ENCODE measurements at regions of chr2 and their contacts with region 1.

Region 1: GRCh38 chr2:12606472-12607000 is 110.2 kb upstream of the TRIB2 start:
- DNase-seq: peak in 3 of 9 donors; percentile 3 to 26 (median 12)
- ATAC-seq: no peak
- H3K4me3 ChIP-seq: no peak overlapping the region
- H3K4me3 Mint-ChIP-seq: no peak overlapping the region
- H3K27ac ChIP-seq: no peak overlapping the region
- H3K27ac Mint-ChIP-seq: no peak overlapping the region
- H3K4me1 ChIP-seq: peaks cover 0 to 10% of the 10 kb centered on the region in 2 donors
- H3K4me1 Mint-ChIP-seq: peaks cover 7 to 37% (median 25%) of the 10 kb centered on the region in 7 donors
- H3K27me3 ChIP-seq: no peaks in the 10 kb centered on the region
- H3K27me3 Mint-ChIP-seq: peaks cover 0 to 16% (median 0%) of the 10 kb centered on the region in 5 donors

Region 2: GRCh38 chr2:12430407-12431133 is 176.0 kb before region 1 on chr2:
- CTCF ChIA-PET with region 1: no interaction called
- POLR2A ChIA-PET with region 1: no interaction called
- intact Hi-C with region 1: loop called in 1 of 2 experiments (anchors 5 kb)
- DNase-seq: peak in 6 of 9 donors; percentile 10 to 28 (median 20)
- ATAC-seq: peak; percentile 87
- H3K4me3 ChIP-seq: peak overlapping the region; percentile 47
- H3K4me3 Mint-ChIP-seq: peak overlapping the region; percentile 31 to 83 (median 77)
- H3K27ac ChIP-seq: peak overlapping the region; percentile 22
- H3K27ac Mint-ChIP-seq: peak overlapping the region; percentile 60 to 91 (median 82)
- H3K4me1 ChIP-seq: peaks cover 0 to 12% of the 10 kb centered on the region in 2 donors
- H3K4me1 Mint-ChIP-seq: peaks cover 25 to 70% (median 49%) of the 10 kb centered on the region in 7 donors
- H3K27me3 ChIP-seq: no peaks in the 10 kb centered on the region
- H3K27me3 Mint-ChIP-seq: no peaks in the 10 kb centered on the region

Region 3: DNA sequence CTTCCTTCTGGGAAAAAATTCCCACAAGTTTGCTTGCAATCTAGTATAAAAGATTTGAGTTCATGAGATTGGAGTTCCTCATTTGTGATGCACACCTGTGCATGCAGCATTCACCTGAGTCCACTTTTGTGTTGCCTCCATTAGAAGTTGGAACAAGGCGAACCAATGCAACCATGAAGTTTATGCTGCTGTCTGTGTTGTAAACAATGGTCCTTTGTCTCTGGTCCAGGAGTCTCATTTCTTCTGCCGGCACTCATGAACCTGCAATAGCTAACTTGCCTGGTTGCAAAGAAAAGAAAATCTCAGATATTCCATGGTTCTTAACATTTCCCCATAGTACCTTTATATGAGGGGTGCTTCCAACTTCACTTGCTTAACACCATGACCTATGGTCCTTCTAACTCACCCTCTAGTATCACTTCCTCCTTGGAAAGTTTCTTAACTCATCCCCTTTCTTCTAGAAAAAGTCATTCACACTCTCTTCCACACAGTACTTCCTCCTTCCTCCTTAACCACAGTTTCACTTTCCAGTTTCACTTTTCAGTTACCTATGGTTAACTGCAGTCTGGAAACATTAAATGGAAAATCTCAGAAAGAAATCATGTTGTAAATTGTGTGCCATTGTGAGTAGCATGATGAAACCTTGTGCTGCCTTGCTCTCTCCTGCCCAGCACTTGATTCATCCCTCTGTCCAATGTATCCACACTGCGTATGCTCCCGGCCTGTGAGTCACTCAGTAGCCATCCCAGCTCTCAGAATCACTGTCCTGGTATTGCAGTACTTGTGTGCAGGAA is 18.6 kb before region 1 on chr2:
- CTCF ChIA-PET with region 1: no interaction called
- POLR2A ChIA-PET with region 1: interaction called, 5 read pairs
- intact Hi-C with region 1: loop called in 1 of 2 experiments (anchors 2 kb)
- DNase-seq: peak in 2 of 9 donors; percentile 7 to 15
- ATAC-seq: peak; percentile 88
- H3K4me3 ChIP-seq: no peak overlapping the region
- H3K4me3 Mint-ChIP-seq: peak overlapping the region; percentile 39 to 80 (median 66)
- H3K27ac ChIP-seq: no peak overlapping the region
- H3K27ac Mint-ChIP-seq: peak overlapping the region; percentile 47 to 82 (median 73)
- H3K4me1 ChIP-seq: peaks cover 6 to 32% of the 10 kb centered on the region in 2 donors
- H3K4me1 Mint-ChIP-seq: peaks cover 21 to 72% (median 40%) of the 10 kb centered on the region in 7 donors
- H3K27me3 ChIP-seq: no peaks in the 10 kb centered on the region
- H3K27me3 Mint-ChIP-seq: peaks cover 0 to 14% (median 0%) of the 10 kb centered on the region in 5 donors

Region 4: GRCh38 chr2:12694990-12695774 is 88.6 kb after region 1 on chr2:
- CTCF ChIA-PET with region 1: no interaction called
- POLR2A ChIA-PET with region 1: no interaction called
- intact Hi-C with region 1: no loop called
- DNase-seq: no peak
- ATAC-seq: peak; percentile 72
- H3K4me3 ChIP-seq: no peak overlapping the region
- H3K4me3 Mint-ChIP-seq: no peak overlapping the region
- H3K27ac ChIP-seq: no peak overlapping the region
- H3K27ac Mint-ChIP-seq: no peak overlapping the region
- H3K4me1 ChIP-seq: no peaks in the 10 kb centered on the region
- H3K4me1 Mint-ChIP-seq: peaks cover 0 to 11% (median 0%) of the 10 kb centered on the region in 7 donors
- H3K27me3 ChIP-seq: no peaks in the 10 kb centered on the region
- H3K27me3 Mint-ChIP-seq: peaks cover 0 to 21% (median 0%) of the 10 kb centered on the region in 5 donors